ENCODE measurements at regions of chr15 and their contacts with region 1.

Region 1: GRCh38 chr15:35545824-35546510 is at the start of gene DPH6:
- DNase-seq: peak; percentile 86 to 87
- ATAC-seq: peak; percentile 94 to 96 (median 96)
- H3K4me3 ChIP-seq: peak within 1 kb of the TSS; percentile 12 to 87 (median 70)
- H3K27ac ChIP-seq: peak within 1 kb of the TSS; percentile 96 to 100 (median 98)
- H3K4me1 ChIP-seq: peaks cover 0 to 40% (median 29%) of the 10 kb centered on the region in 9 donors
- H3K27me3 ChIP-seq: no peaks in the 10 kb centered on the region
- CTCF ChIP-seq: peak in 4 of 9 donors; percentile 12 to 37 (median 24)
- total RNA-seq, gene DPH6: 12.2 to 25.8 (median 23.4) TPM

Region 2: GRCh38 chr15:35674873-35675781 is 129.2 kb after region 1 on chr15:
- intact Hi-C with region 1: loop called in 1 of 10 experiments (anchors 10 kb)
- DNase-seq: peak in 1 of 2 donors; percentile 29
- ATAC-seq: peak in 4 of 8 donors; percentile 18 to 43 (median 30)
- H3K4me3 ChIP-seq: no peak overlapping the region
- H3K27ac ChIP-seq: peak overlapping the region; percentile 8 to 82 (median 49)
- H3K4me1 ChIP-seq: peaks cover 0 to 59% (median 41%) of the 10 kb centered on the region in 9 donors
- H3K27me3 ChIP-seq: no peaks in the 10 kb centered on the region
- CTCF ChIP-seq: no peak

Region 3: GRCh38 chr15:35690698-35691116 is 144.7 kb after region 1 on chr15:
- intact Hi-C with region 1: loop called in 6 of 10 experiments (anchors 5 to 10 kb)
- DNase-seq: no peak
- ATAC-seq: peak; percentile 75 to 96 (median 94)
- H3K4me3 ChIP-seq: peak overlapping the region in 1 of 10 donors; percentile 10
- H3K27ac ChIP-seq: peak overlapping the region; percentile 59 to 91 (median 82)
- H3K4me1 ChIP-seq: peaks cover 8 to 67% (median 44%) of the 10 kb centered on the region in 9 donors
- H3K27me3 ChIP-seq: no peaks in the 10 kb centered on the region
- CTCF ChIP-seq: no peak

Region 4: GRCh38 chr15:35697549-35698299 is 151.8 kb after region 1 on chr15:
- intact Hi-C with region 1: loop called in 6 of 10 experiments (anchors 5 to 10 kb)
- DNase-seq: no peak
- ATAC-seq: peak; percentile 26 to 89 (median 72)
- H3K4me3 ChIP-seq: no peak overlapping the region
- H3K27ac ChIP-seq: peak overlapping the region; percentile 2 to 76 (median 52)
- H3K4me1 ChIP-seq: peaks cover 1 to 55% (median 38%) of the 10 kb centered on the region in 9 donors
- H3K27me3 ChIP-seq: no peaks in the 10 kb centered on the region
- CTCF ChIP-seq: peak in 4 of 9 donors; percentile 18 to 44 (median 33)

Region 5: DNA sequence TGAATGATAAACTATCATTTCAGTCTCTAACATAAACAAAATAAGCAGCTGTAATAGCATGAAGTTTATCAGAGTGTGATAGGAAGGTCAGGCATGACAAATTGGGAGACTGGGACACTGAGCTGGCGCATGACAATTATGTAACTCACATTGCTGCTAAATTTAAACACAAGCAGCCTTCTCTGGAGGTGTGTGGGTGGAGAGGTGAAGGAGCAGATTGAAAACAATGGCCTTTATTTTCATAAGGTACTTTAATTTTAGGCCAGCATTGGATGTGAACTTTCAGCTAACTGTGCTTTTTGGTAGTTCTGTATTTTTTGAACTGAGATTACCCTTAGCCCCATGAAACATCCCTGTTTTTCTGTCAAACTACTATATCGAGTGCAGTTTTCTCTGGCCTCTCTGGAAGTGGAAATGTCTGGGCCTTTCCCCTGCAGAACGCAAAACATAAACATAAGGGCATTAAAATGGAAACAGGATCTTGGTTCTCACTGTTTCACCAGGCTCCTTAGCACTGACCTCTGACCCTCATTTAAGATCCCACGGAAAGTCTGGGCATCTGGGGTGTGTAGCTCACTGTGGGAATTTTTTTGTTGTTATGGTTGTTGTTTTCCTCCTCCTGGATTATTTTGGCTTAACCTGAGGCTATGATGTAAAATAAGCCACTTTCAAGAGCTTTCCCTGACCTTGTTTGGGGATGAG is 160.1 kb after region 1 on chr15:
- intact Hi-C with region 1: loop called in 1 of 10 experiments (anchors 5 kb)
- DNase-seq: peak in 1 of 2 donors; percentile 65
- ATAC-seq: peak; percentile 91 to 99 (median 96)
- H3K4me3 ChIP-seq: no peak overlapping the region
- H3K27ac ChIP-seq: peak overlapping the region; percentile 52 to 91 (median 80)
- H3K4me1 ChIP-seq: peaks cover 0 to 40% (median 25%) of the 10 kb centered on the region in 9 donors
- H3K27me3 ChIP-seq: no peaks in the 10 kb centered on the region
- CTCF ChIP-seq: no peak

Region 6: GRCh38 chr15:35751413-35752133 is 205.6 kb after region 1 on chr15:
- intact Hi-C with region 1: loop called in 3 of 10 experiments (anchors 5 to 10 kb)
- DNase-seq: peak; percentile 25 to 80
- ATAC-seq: peak; percentile 55 to 94 (median 87)
- H3K4me3 ChIP-seq: peak overlapping the region in 2 of 10 donors; percentile 8 to 14
- H3K27ac ChIP-seq: no peak overlapping the region
- H3K4me1 ChIP-seq: peaks cover 0 to 12% (median 2%) of the 10 kb centered on the region in 9 donors
- H3K27me3 ChIP-seq: no peaks in the 10 kb centered on the region
- CTCF ChIP-seq: peak; percentile 59 to 88 (median 81)

Region 7: GRCh38 chr15:35834216-35834830 is 288.4 kb after region 1 on chr15:
- intact Hi-C with region 1: loop called in 1 of 10 experiments (anchors 10 kb)
- DNase-seq: no peak
- ATAC-seq: no peak
- H3K4me3 ChIP-seq: no peak overlapping the region
- H3K27ac ChIP-seq: no peak overlapping the region
- H3K4me1 ChIP-seq: peaks cover 0 to 14% (median 5%) of the 10 kb centered on the region in 9 donors
- H3K27me3 ChIP-seq: no peaks in the 10 kb centered on the region
- CTCF ChIP-seq: no peak